Spleen (tissue), 13 donors: ENCODE measurements at regions of chr16 and their contacts with region 1.

Region 1: DNA sequence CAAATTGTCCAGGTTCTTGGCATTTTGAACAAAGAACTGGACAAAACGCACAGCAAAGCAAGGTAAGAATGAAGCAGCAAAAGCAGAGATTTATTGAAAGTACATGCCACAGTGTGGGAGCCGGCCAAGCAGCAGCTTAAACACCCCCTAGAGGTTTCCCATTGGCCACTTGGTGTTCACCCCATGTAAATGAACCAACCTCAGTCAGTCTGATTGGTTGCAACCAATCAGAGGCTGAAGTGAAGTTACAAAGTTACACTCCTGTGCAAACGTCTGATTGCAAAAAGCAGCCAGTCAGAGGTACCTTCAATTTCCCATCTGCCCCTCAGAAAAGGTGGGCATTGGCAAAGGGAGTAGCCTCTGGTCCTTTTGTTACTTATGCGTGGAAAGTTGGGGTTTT is 8.8 kb upstream of the ZNF263 start:
- DNase-seq: no peak
- H3K4me3 ChIP-seq: no peak overlapping the region
- H3K27ac ChIP-seq: no peak overlapping the region
- H3K4me1 ChIP-seq: peaks cover 0 to under 1% (median 0%) of the 10 kb centered on the region in 6 donors
- H3K27me3 ChIP-seq: no peaks in the 10 kb centered on the region
- CTCF ChIP-seq: no peak
- POLR2A ChIP-seq: no peak

Region 2: GRCh38 chr16:3443108-3444031 is 168.9 kb after region 1 on chr16 and contains the starts of genes NAA60 and ZNF597:
- intact Hi-C with region 1: no loop called
- DNase-seq: peak; percentile 91
- H3K4me3 ChIP-seq: peak within 1 kb of the TSS; percentile 39 to 70 (median 58)
- H3K27ac ChIP-seq: peak within 1 kb of the TSS; percentile 29 to 90 (median 81)
- H3K4me1 ChIP-seq: peaks cover 6 to 33% (median 13%) of the 10 kb centered on the region in 6 donors
- H3K27me3 ChIP-seq: peaks cover 0 to 7% (median 0%) of the 10 kb centered on the region in 7 donors
- CTCF ChIP-seq: peak in 1 of 11 experiments; percentile 4
- POLR2A ChIP-seq: no peak
- total RNA-seq, gene NAA60: 35.0 to 85.9 (median 51.2) TPM
- total RNA-seq, gene ZNF597: 2.4 to 4.6 (median 3.7) TPM

Region 3: GRCh38 chr16:3467921-3468320 is 193.4 kb after region 1 on chr16:
- intact Hi-C with region 1: loop called (anchors 10 kb)
- DNase-seq: no peak
- H3K4me3 ChIP-seq: no peak overlapping the region
- H3K27ac ChIP-seq: no peak overlapping the region
- H3K4me1 ChIP-seq: peaks cover 10 to 95% (median 54%) of the 10 kb centered on the region in 6 donors
- H3K27me3 ChIP-seq: no peaks in the 10 kb centered on the region
- CTCF ChIP-seq: no peak
- POLR2A ChIP-seq: no peak